ENCODE measurements at regions of chr6 and their contacts with region 1.

Region 1: GRCh38 chr6:12289933-12290820 is at the start of gene EDN1:
- DNase-seq: peak; percentile 66
- ATAC-seq: peak; percentile 88
- H3K4me3 Mint-ChIP-seq: peak within 1 kb of the TSS; percentile 74
- H3K27ac Mint-ChIP-seq: no peak within 1 kb of the TSS
- H3K4me1 Mint-ChIP-seq: peaks cover 14% of the 10 kb centered on the region
- H3K27me3 Mint-ChIP-seq: peaks cover 60% of the 10 kb centered on the region
- total RNA-seq, gene EDN1: not detected

Region 2: GRCh38 chr6:11654876-11655275 is 635.3 kb before region 1 on chr6:
- CTCF ChIA-PET with region 1: interaction called, 24 read pairs
- DNase-seq: no peak
- ATAC-seq: no peak
- H3K4me3 Mint-ChIP-seq: no peak overlapping the region
- H3K27ac Mint-ChIP-seq: no peak overlapping the region
- H3K4me1 Mint-ChIP-seq: peaks cover 15% of the 10 kb centered on the region
- H3K27me3 Mint-ChIP-seq: peaks cover 39% of the 10 kb centered on the region

Region 3: DNA sequence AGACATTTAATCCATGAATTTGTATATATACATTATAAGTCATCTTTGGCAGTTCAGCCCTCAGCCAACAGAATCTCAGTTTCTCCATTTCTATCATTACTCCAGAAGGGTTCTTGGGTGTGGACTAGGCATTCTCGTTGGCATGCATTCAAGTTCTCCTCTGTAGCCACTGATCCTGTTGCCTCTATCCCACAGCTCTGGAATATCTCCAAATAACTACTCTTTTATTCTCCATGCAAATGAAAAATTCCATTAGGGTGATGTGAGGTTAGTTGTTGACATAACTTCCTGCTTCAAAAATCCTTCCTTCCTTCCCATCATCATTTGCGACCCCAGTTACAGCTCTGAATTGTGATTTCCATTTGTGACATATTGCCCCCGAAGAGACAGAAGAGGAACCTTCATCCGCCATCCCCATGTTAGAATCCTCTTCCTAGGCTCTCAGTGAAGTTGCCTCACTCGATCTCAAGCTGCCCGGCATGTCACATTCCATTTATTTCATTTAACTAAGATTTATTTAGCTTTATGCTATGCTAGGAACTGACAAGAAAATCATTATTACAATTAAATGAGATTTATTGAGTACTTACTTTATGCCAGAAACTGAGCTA is 93.7 kb before region 1 on chr6:
- CTCF ChIA-PET with region 1: no interaction called
- DNase-seq: no peak
- ATAC-seq: no peak
- H3K4me3 Mint-ChIP-seq: no peak overlapping the region
- H3K27ac Mint-ChIP-seq: no peak overlapping the region
- H3K4me1 Mint-ChIP-seq: no peaks in the 10 kb centered on the region
- H3K27me3 Mint-ChIP-seq: peaks cover 4% of the 10 kb centered on the region